Heart right ventricle (tissue), 16 donors: ENCODE measurements at regions of chr20 and their contacts with region 1.

Region 1: DNA sequence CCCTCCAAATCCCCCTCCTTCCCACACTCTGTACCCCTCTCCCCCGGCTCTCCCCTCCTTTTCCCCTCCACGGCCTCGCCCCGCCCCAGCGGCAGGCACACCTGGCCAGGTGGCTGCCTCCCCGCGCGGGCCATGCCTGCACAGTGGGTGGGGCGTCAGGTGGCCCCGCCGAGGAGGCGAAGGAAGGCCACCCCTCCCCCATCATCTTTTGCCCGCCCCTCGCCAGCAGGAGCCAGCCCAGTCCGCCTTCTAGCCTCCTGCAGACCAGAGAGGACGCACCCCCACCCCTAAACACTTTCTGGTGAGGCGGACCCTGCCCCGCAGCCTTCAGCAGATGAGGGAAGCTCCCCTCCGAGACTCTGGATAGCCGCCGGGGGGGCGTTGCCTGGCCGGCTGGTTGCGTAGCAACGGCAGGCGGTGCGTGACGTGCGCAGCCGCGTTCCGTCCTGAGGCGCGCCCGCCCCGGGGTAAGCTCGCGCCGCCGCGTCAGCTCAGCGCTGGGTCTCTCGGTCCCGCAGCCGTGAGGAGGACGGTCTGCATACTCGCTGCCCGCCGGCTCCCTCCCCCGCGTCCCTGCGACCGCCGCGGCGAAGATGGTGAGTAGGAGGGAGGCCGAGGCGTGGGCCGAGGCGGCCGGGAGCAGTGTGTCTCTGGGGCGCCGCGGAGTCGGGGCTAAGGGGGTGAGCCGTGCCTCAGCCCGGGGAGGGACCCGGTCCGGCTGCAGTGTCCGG is at the start of gene DSTN:
- DNase-seq: peak; percentile 92 to 94
- ATAC-seq: peak; percentile 91 to 96 (median 94)
- H3K4me3 ChIP-seq: peak within 1 kb of the TSS; percentile 81 to 99 (median 96)
- H3K27ac ChIP-seq: peak within 1 kb of the TSS; percentile 95 to 100 (median 99)
- H3K4me1 ChIP-seq: peaks cover 4 to 55% (median 49%) of the 10 kb centered on the region in 9 donors
- H3K27me3 ChIP-seq: no peaks in the 10 kb centered on the region
- CTCF ChIP-seq: no peak
- total RNA-seq, gene DSTN: 353 to 802 (median 569) TPM

Region 2: GRCh38 chr20:17604852-17605660 is 35.3 kb after region 1 on chr20:
- intact Hi-C with region 1: loop called in 5 of 10 experiments (anchors 5 kb)
- DNase-seq: no peak
- ATAC-seq: peak in 1 of 8 donors; percentile 30
- H3K4me3 ChIP-seq: no peak overlapping the region
- H3K27ac ChIP-seq: no peak overlapping the region
- H3K4me1 ChIP-seq: peaks cover 0 to 43% (median 14%) of the 10 kb centered on the region in 9 donors
- H3K27me3 ChIP-seq: no peaks in the 10 kb centered on the region
- CTCF ChIP-seq: no peak

Region 3: GRCh38 chr20:17611540-17612286 is 41.9 kb after region 1 on chr20:
- intact Hi-C with region 1: loop called in 6 of 10 experiments (anchors 2 to 5 kb)
- DNase-seq: no peak
- ATAC-seq: peak in 5 of 8 donors; percentile 2 to 18 (median 5)
- H3K4me3 ChIP-seq: no peak overlapping the region
- H3K27ac ChIP-seq: peak overlapping the region in 9 of 10 donors; percentile 42 to 66 (median 56)
- H3K4me1 ChIP-seq: peaks cover 32 to 69% (median 53%) of the 10 kb centered on the region in 9 donors
- H3K27me3 ChIP-seq: no peaks in the 10 kb centered on the region
- CTCF ChIP-seq: peak in 3 of 9 donors; percentile 3 to 38 (median 30)

Region 4: DNA sequence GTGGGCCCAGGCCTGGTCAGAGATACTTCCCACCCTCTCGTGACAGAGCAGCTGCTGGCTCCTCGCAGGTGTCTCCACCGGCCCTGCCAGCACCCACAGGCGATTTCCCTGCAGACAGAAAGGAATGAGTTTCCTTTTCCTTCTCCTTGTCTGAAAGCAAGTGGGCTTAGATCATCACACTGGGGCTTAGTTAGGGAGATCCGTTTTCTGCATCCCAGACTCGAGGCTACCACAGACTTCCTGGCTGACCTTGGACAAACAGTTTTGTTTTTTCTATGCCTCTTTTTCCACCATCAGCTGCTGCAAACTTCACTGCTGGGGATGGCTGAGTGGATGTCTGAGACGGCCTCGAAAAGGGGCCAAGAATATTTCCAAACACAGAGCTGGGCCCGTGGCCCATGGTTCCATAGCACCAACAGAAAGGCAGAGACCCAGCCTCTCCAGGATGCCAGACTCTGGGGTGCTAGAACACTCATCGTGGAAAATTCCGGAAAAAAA is 216.5 kb after region 1 on chr20:
- intact Hi-C with region 1: no loop called
- DNase-seq: no peak
- ATAC-seq: peak; percentile 39 to 91 (median 72)
- H3K4me3 ChIP-seq: no peak overlapping the region
- H3K27ac ChIP-seq: peak overlapping the region in 8 of 10 donors; percentile 3 to 73 (median 60)
- H3K4me1 ChIP-seq: peaks cover 0 to 15% (median 6%) of the 10 kb centered on the region in 9 donors
- H3K27me3 ChIP-seq: no peaks in the 10 kb centered on the region
- CTCF ChIP-seq: no peak

Region 5: DNA sequence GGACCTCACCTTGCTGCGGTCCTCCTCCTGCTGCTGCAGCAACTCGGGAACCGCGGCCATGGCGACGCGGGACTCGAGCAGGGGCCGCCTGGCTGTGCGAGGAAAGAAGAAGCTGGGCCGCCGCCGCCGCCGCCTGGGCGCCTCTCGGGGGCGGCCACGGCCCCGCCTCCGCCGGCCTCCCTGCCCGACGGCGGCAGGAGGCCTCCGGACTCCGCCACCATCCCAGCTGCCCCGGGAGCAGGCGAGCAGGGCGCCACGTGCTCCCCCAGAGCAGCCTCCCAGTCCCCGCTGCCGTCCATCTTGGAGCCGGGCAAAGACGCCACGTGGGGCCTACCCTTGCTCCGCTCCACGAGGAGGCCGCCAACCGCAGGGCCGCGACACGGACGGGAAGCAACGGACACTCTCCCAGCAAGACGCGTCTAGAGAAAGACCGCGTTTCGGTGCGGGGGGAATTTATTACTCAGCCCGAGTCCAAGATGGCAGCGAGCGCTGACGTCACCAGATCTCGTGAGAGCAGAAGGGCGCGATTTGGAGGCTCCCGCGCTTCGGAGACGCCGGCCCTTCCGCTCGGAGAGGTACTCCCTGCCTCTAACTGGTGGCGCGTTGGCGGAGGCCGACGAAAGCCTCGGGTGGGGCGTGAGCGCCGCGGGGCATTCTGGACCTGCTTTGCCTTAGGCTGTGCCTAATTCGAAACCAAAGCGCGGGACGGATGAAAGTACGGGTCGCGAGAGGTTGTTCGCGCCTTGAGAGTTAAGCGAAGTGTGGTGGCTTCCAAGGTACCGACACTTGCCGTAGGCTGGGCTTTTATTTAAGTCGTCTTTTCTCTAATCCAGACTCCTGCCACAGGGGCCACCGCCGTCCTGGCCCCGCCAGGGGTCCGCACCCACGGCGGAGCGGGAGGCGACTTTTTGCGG is 398.8 kb after region 1 on chr20 and contains the starts of genes MGME1 and SNX5:
- intact Hi-C with region 1: loop called in 1 of 10 experiments (anchors 2 kb)
- DNase-seq: peak; percentile 100
- ATAC-seq: peak; percentile 95 to 99 (median 98)
- H3K4me3 ChIP-seq: peak within 1 kb of the TSS; percentile 75 to 97 (median 92)
- H3K27ac ChIP-seq: peak within 1 kb of the TSS; percentile 89 to 99 (median 96)
- H3K4me1 ChIP-seq: peaks cover 0 to 80% (median 77%) of the 10 kb centered on the region in 9 donors
- H3K27me3 ChIP-seq: no peaks in the 10 kb centered on the region
- CTCF ChIP-seq: peak in 2 of 9 donors; percentile 10 to 20
- total RNA-seq, gene MGME1: 9.7 to 16.0 (median 12.9) TPM
- total RNA-seq, gene SNX5: 41.6 to 59.1 (median 47.3) TPM